ENCODE measurements at regions of chrX and their contacts with region 1.

Region 1: DNA sequence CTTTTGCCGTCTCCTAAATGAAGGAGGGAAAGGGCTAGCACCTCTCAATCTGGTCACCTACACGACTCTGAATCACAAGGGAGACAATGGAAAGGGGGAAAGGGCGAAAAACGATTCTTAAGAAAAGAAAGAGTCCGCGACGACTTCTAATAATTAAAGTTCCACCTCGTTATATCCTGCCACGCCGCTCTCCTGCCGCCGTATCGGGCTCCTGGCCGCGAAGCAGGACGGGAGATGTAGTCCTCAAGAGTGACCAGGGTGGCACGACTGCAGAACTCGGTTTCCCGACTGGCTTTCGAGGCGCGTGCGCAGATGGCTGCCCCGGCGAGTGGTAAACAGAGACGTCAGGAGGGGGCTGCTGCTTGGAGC is at the start of gene FOXO4:
- DNase-seq: peak; percentile 86 to 99 (median 91)

Region 2: GRCh38 chrX:71067722-71068048 is 27.8 kb before region 1 on chrX:
- intact Hi-C with region 1: loop called (anchors 1 kb)
- DNase-seq: no peak

Region 3: DNA sequence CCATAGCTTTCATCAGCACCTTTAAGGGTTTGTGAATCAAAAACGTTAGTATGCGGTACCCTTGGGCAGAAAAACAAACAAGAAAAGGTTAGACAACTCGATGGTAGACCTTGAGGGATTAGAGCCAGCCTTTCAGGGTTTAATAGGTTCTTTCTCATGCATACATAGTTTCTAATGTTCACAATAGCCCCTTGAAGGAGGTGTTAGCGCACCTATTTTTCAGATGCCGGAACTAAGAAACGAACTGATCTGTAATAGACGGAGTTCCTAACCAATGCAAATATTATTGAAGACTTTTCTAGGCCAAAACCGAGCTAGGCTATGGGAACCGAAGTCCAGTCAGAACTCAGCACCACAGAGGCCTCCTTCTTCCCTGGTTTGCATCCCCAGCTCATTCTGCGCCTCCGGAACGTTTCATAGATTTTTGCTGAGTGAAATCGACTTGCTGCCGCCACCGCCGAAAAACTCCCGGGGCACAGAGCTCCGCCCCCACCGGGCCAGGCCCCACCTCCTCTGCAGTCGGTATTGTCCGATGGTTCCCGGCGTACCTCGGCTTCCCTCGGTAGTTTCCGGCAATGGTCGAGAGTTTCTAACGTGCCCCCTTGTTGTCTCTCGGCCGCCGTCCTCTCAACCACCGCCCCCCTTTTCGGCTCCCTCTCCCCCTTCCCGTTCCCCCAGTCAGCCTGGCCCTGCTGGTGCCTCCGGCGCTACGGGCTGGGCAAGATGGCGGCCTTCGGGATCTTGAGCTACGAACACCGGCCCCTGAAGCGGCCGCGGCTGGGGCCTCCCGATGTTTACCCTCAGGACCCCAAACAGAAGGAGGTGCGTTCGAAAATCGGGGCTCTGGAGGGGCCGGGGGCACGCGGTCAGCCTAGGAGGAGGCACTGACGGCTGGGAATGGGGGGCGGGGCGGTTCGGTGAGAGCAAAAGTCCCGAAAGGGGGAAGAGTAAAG is 22.8 kb after region 1 on chrX and contains the start of gene MED12:
- intact Hi-C with region 1: loop called (anchors 2 kb)
- DNase-seq: peak; percentile 76 to 98 (median 85)

Region 4: DNA sequence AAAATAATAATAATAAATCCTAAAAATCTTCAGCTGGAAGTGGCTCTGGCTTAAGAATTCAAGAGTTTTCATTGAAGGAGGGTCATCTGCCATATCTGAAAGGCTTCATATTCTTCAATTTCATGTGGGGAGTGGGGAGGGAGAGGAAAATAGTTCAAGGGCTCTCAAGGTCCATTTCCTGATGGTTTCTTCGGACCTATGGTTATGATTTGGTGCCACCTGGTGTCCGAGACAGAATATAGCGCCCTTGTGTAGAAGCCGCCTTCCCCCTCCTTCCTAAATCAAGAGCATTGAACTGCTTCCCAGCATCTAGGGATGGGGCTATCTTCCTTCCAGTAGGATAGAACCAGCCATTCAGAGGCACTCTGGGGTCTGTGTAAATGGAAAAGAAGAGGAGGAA is 83.4 kb after region 1 on chrX:
- intact Hi-C with region 1: loop called (anchors 5 kb)
- DNase-seq: peak in 6 of 10 donors; percentile 41 to 90 (median 52)

Region 5: GRCh38 chrX:71365876-71366673 is 270.5 kb after region 1 on chrX and contains the start of gene TAF1:
- intact Hi-C with region 1: loop called (anchors 5 kb)
- DNase-seq: peak; percentile 86 to 98 (median 92)